ENCODE measurements at regions of chr21 and their contacts with region 1.

Region 1: GRCh38 chr21:32412162-32413014 is at the start of gene EVA1C:
- DNase-seq: peak; percentile 59 to 77
- ATAC-seq: peak; percentile 69
- total RNA-seq, gene EVA1C: 10.3 to 24.5 TPM

Region 2: DNA sequence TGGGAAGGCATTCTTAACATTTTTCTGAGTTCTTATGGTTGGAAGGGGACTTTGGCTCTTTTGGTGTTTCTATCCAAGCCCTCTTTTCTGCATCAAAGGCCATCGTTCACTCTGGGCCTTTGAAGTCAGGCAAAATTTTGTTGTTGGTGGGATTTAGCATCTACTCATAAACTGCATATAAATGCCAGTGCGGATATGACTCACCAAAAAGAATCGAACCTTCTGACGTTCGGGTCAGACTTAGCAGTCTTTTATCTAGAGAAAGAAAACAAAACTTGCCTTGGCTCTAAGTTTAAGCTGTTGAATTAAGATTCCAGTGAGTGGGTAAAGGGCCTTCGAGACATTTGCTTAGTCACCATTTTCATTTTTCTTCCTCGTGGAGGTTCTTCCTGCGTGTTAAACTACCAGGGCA is 51.5 kb after region 1 on chr21:
- intact Hi-C with region 1: loop called in 1 of 2 experiments (anchors 10 kb)
- DNase-seq: no peak
- ATAC-seq: no peak

Region 3: GRCh38 chr21:32569261-32570230 is 157.2 kb after region 1 on chr21:
- intact Hi-C with region 1: loop called in 1 of 2 experiments (anchors 10 kb)
- DNase-seq: peak; percentile 67 to 84
- ATAC-seq: peak; percentile 89